Right lobe of liver (tissue), 6 donors: ENCODE measurements at regions of chr4 and their contacts with region 1.

Region 1: GRCh38 chr4:69617083-69617694 is 22.3 kb downstream of the UGT2A2 start:
- DNase-seq: no peak
- ATAC-seq: peak; percentile 83 to 91 (median 88)
- H3K4me3 ChIP-seq: no peak overlapping the region
- H3K27ac ChIP-seq: no peak overlapping the region
- H3K4me1 ChIP-seq: peaks cover 0 to 7% (median 0%) of the 10 kb centered on the region in 4 donors
- H3K27me3 ChIP-seq: no peaks in the 10 kb centered on the region
- CTCF ChIP-seq: peak; percentile 41 to 79 (median 64)
- POLR2A ChIP-seq: no peak

Region 2: GRCh38 chr4:69322055-69322454 is 295.1 kb before region 1 on chr4:
- intact Hi-C with region 1: loop called in 1 of 2 experiments (anchors 10 kb)
- DNase-seq: no peak
- ATAC-seq: peak in 1 of 4 donors; percentile 23
- H3K4me3 ChIP-seq: no peak overlapping the region
- H3K27ac ChIP-seq: no peak overlapping the region
- H3K4me1 ChIP-seq: peaks cover 0 to 7% (median 0%) of the 10 kb centered on the region in 4 donors
- H3K27me3 ChIP-seq: no peaks in the 10 kb centered on the region
- CTCF ChIP-seq: no peak
- POLR2A ChIP-seq: no peak